H1 (cell line): ENCODE measurements at regions of chr17 and their contacts with region 1.

Region 1: GRCh38 chr17:79810130-79811010 is 13.5 kb upstream of the CBX8 start:
- DNase-seq: peak in 1 of 2 experiments; percentile 79
- H3K4me3 ChIP-seq: peak overlapping the region in 2 of 4 experiments; percentile 16 to 55; a peak in 3 of 8 replicates
- H3K27ac ChIP-seq: no peak overlapping the region
- H3K4me1 ChIP-seq: peaks cover 0 to 54% (median 40%) of the 10 kb centered on the region in 4 experiments; a peak in 6 of 7 replicates
- H3K27me3 ChIP-seq: peaks cover 82 to 95% (median 93%) of the 10 kb centered on the region in 4 experiments
- CTCF ChIP-seq: no peak
- EP300 ChIP-seq: no peak
- POLR2A ChIP-seq: no peak
- RAD21 ChIP-seq: no peak

Region 2: GRCh38 chr17:79730769-79731483 is 79.4 kb before region 1 on chr17 and contains the start of gene ENPP7:
- CTCF ChIA-PET with region 1: no interaction called
- POLR2A ChIA-PET with region 1: no interaction called
- DNase-seq: no peak
- H3K4me3 ChIP-seq: no peak within 1 kb of the TSS
- H3K27ac ChIP-seq: no peak within 1 kb of the TSS
- H3K4me1 ChIP-seq: peaks cover 0 to 6% (median 0%) of the 10 kb centered on the region in 4 experiments; a peak in 2 of 7 replicates
- H3K27me3 ChIP-seq: no peaks in the 10 kb centered on the region
- CTCF ChIP-seq: no peak
- EP300 ChIP-seq: no peak
- POLR2A ChIP-seq: no peak
- RAD21 ChIP-seq: no peak
- total RNA-seq, gene ENPP7: not detected in 2 replicates

Region 3: GRCh38 chr17:79741751-79742588 is 68.4 kb before region 1 on chr17:
- CTCF ChIA-PET with region 1: interaction called, 94 read pairs
- POLR2A ChIA-PET with region 1: interaction called, 4 read pairs
- DNase-seq: peak; percentile 49 to 99
- H3K4me3 ChIP-seq: peak overlapping the region; percentile 35 to 72 (median 58)
- H3K27ac ChIP-seq: no peak overlapping the region
- H3K4me1 ChIP-seq: peaks cover 4 to 15% (median 8%) of the 10 kb centered on the region in 4 experiments; a peak in 6 of 7 replicates
- H3K27me3 ChIP-seq: peaks cover 0 to 31% (median 26%) of the 10 kb centered on the region in 4 experiments; a peak in 6 of 7 replicates
- CTCF ChIP-seq: peak; percentile 84 to 94 (median 92)
- EP300 ChIP-seq: no peak
- POLR2A ChIP-seq: no peak
- RAD21 ChIP-seq: peak; percentile 57 to 75

Region 4: GRCh38 chr17:79789534-79790353 is 20.6 kb before region 1 on chr17:
- CTCF ChIA-PET with region 1: interaction called, 23 read pairs
- POLR2A ChIA-PET with region 1: interaction called, 6 read pairs
- DNase-seq: peak in 1 of 2 experiments; percentile 83
- H3K4me3 ChIP-seq: peak overlapping the region; percentile 18 to 62 (median 29); a peak in 7 of 8 replicates
- H3K27ac ChIP-seq: no peak overlapping the region
- H3K4me1 ChIP-seq: peaks cover 7 to 43% (median 30%) of the 10 kb centered on the region in 4 experiments
- H3K27me3 ChIP-seq: peaks cover 41 to 67% (median 61%) of the 10 kb centered on the region in 4 experiments
- CTCF ChIP-seq: peak; percentile 66 to 75 (median 73)
- EP300 ChIP-seq: no peak
- POLR2A ChIP-seq: no peak
- RAD21 ChIP-seq: peak; percentile 68 to 75

Region 5: GRCh38 chr17:79844869-79845600 is 34.7 kb after region 1 on chr17:
- CTCF ChIA-PET with region 1: interaction called, 91 read pairs
- POLR2A ChIA-PET with region 1: interaction called, 111 read pairs
- DNase-seq: peak in 1 of 2 experiments; percentile 88
- H3K4me3 ChIP-seq: peak overlapping the region in 3 of 4 experiments; percentile 20 to 60 (median 23); a peak in 4 of 8 replicates
- H3K27ac ChIP-seq: no peak overlapping the region
- H3K4me1 ChIP-seq: peaks cover 0 to 23% (median 15%) of the 10 kb centered on the region in 4 experiments; a peak in 5 of 7 replicates
- H3K27me3 ChIP-seq: peaks cover 57 to 64% (median 63%) of the 10 kb centered on the region in 4 experiments
- CTCF ChIP-seq: peak; percentile 67 to 88 (median 84)
- EP300 ChIP-seq: 0 out of 3 replicates have a peak, but pooled peaks of 1 of the 2 experiments have one; percentile 15
- POLR2A ChIP-seq: no peak
- RAD21 ChIP-seq: peak; percentile 55 to 77

Region 6: GRCh38 chr17:79915850-79916430 is 105.6 kb after region 1 on chr17:
- CTCF ChIA-PET with region 1: interaction called, 20 read pairs
- POLR2A ChIA-PET with region 1: interaction called, 3 read pairs
- DNase-seq: peak; percentile 64 to 74
- H3K4me3 ChIP-seq: no peak overlapping the region
- H3K27ac ChIP-seq: no peak overlapping the region
- H3K4me1 ChIP-seq: peaks cover 0 to 8% (median 4%) of the 10 kb centered on the region in 4 experiments; a peak in 5 of 7 replicates
- H3K27me3 ChIP-seq: no peaks in the 10 kb centered on the region; a peak in 2 of 7 replicates
- CTCF ChIP-seq: peak; percentile 52 to 69 (median 68)
- EP300 ChIP-seq: no peak
- POLR2A ChIP-seq: no peak
- RAD21 ChIP-seq: peak; percentile 79 to 82